ENCODE measurements at regions of chr9 and their contacts with region 1.

Region 1: GRCh38 chr9:78035383-78035993 is 3.9 kb upstream of the GNAQ start:
- DNase-seq: peak in 7 of 9 donors; percentile 53 to 76 (median 72)
- ATAC-seq: peak; percentile 36
- H3K4me3 ChIP-seq: no peak overlapping the region
- H3K4me3 Mint-ChIP-seq: peak overlapping the region in 6 of 10 donors; percentile 3 to 41 (median 24)
- H3K27ac ChIP-seq: no peak overlapping the region
- H3K27ac Mint-ChIP-seq: peak overlapping the region in 7 of 9 donors; percentile 2 to 84 (median 36)
- H3K4me1 ChIP-seq: peaks cover 0 to 20% of the 10 kb centered on the region in 2 donors
- H3K4me1 Mint-ChIP-seq: peaks cover 19 to 35% (median 34%) of the 10 kb centered on the region in 7 donors
- H3K27me3 ChIP-seq: no peaks in the 10 kb centered on the region
- H3K27me3 Mint-ChIP-seq: peaks cover 0 to 4% (median 0%) of the 10 kb centered on the region in 5 donors

Region 2: DNA sequence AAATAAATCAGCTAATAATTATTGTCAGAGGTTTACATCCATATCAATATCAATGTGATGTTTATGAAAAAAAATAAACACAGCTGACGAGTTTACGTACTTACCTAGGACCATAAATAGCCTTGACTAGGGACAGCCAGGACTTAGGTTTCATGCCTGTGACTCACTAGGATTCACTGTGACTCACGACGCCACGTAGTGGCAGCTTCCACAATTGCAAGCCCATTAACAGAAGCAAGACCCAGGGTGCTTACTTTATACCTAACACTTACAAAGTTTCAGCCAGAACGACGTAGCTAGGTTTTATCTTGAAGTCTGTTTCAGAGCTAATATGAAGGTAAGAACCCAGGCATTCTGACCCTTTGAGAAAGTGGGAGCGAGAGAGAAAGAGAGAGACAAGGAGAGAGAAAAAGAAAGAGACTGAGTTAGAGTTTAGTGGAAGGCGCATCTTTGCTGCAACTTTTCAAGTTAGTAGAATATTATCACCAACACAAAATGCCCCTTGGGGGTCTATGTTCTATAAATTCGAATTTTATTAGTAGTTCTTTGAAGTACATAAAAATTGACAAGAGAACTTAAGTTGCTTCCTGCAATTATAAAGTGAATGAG is 578.6 kb before region 1 on chr9:
- CTCF ChIA-PET with region 1: interaction called, 18 read pairs
- POLR2A ChIA-PET with region 1: no interaction called
- intact Hi-C with region 1: loop called (anchors 1 kb)
- DNase-seq: peak; percentile 43 to 77 (median 68)
- ATAC-seq: peak; percentile 83
- H3K4me3 ChIP-seq: no peak overlapping the region
- H3K4me3 Mint-ChIP-seq: no peak overlapping the region
- H3K27ac ChIP-seq: no peak overlapping the region
- H3K27ac Mint-ChIP-seq: no peak overlapping the region
- H3K4me1 ChIP-seq: no peaks in the 10 kb centered on the region
- H3K4me1 Mint-ChIP-seq: peaks cover 9 to 30% (median 24%) of the 10 kb centered on the region in 7 donors
- H3K27me3 ChIP-seq: no peaks in the 10 kb centered on the region
- H3K27me3 Mint-ChIP-seq: no peaks in the 10 kb centered on the region

Region 3: GRCh38 chr9:77827104-77827784 is 208.2 kb before region 1 on chr9:
- CTCF ChIA-PET with region 1: no interaction called
- POLR2A ChIA-PET with region 1: no interaction called
- intact Hi-C with region 1: loop called in 1 of 2 experiments (anchors 5 kb)
- DNase-seq: peak in 2 of 9 donors; percentile 5 to 13
- ATAC-seq: peak; percentile 51
- H3K4me3 ChIP-seq: no peak overlapping the region
- H3K4me3 Mint-ChIP-seq: peak overlapping the region in 9 of 10 donors; percentile 10 to 71 (median 47)
- H3K27ac ChIP-seq: no peak overlapping the region
- H3K27ac Mint-ChIP-seq: peak overlapping the region in 5 of 9 donors; percentile 8 to 67 (median 60)
- H3K4me1 ChIP-seq: peaks cover 0 to 8% of the 10 kb centered on the region in 2 donors
- H3K4me1 Mint-ChIP-seq: peaks cover 23 to 56% (median 43%) of the 10 kb centered on the region in 7 donors
- H3K27me3 ChIP-seq: no peaks in the 10 kb centered on the region
- H3K27me3 Mint-ChIP-seq: no peaks in the 10 kb centered on the region

Region 4: GRCh38 chr9:77977210-77977611 is 58.3 kb before region 1 on chr9:
- CTCF ChIA-PET with region 1: interaction called, 50 read pairs
- POLR2A ChIA-PET with region 1: interaction called, 4 read pairs
- intact Hi-C with region 1: loop called (anchors 1 kb)
- DNase-seq: peak; percentile 12 to 58 (median 47)
- ATAC-seq: peak; percentile 78
- H3K4me3 ChIP-seq: peak overlapping the region; percentile 2
- H3K4me3 Mint-ChIP-seq: peak overlapping the region in 9 of 10 donors; percentile 29 to 77 (median 60)
- H3K27ac ChIP-seq: peak overlapping the region; percentile 20
- H3K27ac Mint-ChIP-seq: peak overlapping the region; percentile 57 to 87 (median 78)
- H3K4me1 ChIP-seq: peaks cover 23 to 45% of the 10 kb centered on the region in 2 donors
- H3K4me1 Mint-ChIP-seq: peaks cover 41 to 76% (median 62%) of the 10 kb centered on the region in 7 donors
- H3K27me3 ChIP-seq: no peaks in the 10 kb centered on the region
- H3K27me3 Mint-ChIP-seq: no peaks in the 10 kb centered on the region

Region 5: DNA sequence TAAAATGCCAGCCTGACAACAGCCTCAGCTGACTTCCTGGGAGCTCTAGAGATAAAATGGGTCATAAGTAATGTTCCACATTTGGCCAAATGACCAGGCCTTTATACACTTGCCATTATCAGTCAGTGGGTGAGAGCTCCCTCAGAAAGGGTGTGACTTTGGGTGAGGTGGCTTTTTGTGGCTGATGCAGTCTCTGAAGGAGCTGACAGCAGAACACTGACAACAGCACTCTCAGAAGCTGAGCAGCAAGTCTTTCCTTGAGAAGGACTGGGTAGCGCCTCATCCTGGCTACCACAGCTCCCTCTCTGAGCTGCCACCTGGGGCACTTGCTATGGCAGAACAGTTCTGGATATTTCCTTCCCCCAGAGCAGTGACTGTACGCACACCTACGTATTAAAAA is 18.1 kb after region 1 on chr9:
- CTCF ChIA-PET with region 1: interaction called, 20 read pairs
- POLR2A ChIA-PET with region 1: interaction called, 3 read pairs
- intact Hi-C with region 1: no loop called
- DNase-seq: no peak
- ATAC-seq: peak; percentile 31
- H3K4me3 ChIP-seq: no peak overlapping the region
- H3K4me3 Mint-ChIP-seq: peak overlapping the region in 7 of 10 donors; percentile 19 to 69 (median 47)
- H3K27ac ChIP-seq: no peak overlapping the region
- H3K27ac Mint-ChIP-seq: peak overlapping the region in 2 of 9 donors; percentile 7 to 48
- H3K4me1 ChIP-seq: peaks cover 14 to 16% of the 10 kb centered on the region in 2 donors
- H3K4me1 Mint-ChIP-seq: peaks cover 15 to 41% (median 25%) of the 10 kb centered on the region in 7 donors
- H3K27me3 ChIP-seq: no peaks in the 10 kb centered on the region
- H3K27me3 Mint-ChIP-seq: peaks cover 0 to 42% (median 0%) of the 10 kb centered on the region in 5 donors

Region 6: DNA sequence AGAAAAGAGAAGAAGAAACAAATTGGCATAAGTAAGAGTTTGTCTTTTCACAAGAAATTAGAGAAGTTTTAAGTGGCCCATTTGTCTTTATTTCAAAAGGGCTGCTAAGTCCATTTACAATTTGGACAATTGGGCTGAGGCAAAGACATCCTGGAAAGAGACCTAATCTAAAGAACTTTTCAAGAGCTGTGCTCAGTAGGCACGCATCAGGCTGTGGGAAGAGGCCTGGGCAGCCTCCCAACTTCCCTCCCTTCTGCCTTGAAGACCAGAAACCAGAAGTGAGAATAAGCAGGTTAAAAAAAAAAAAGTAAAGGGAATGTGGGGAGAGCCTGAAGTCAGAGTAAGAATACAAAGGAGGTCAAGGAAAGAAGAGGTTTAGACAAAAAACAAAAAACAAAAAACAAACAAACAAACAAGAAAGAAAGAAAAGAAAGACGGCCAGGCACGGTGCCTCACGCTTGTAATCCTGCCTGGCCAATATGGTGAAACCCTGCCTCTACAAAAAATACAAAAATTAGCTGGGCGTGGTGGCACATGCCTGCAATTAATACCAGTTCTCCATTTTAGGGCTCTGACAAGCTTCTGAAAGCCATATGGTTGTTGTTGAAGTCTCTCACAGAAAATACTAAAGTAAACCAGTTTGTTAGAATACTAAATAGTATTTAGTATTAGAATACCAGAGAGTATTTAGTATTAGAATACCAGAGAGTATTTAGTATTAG is 152.4 kb after region 1 on chr9:
- CTCF ChIA-PET with region 1: no interaction called
- POLR2A ChIA-PET with region 1: no interaction called
- intact Hi-C with region 1: no loop called
- DNase-seq: no peak
- ATAC-seq: no peak
- H3K4me3 ChIP-seq: no peak overlapping the region
- H3K4me3 Mint-ChIP-seq: no peak overlapping the region
- H3K27ac ChIP-seq: no peak overlapping the region
- H3K27ac Mint-ChIP-seq: peak overlapping the region in 2 of 9 donors; percentile 9 to 71
- H3K4me1 ChIP-seq: no peaks in the 10 kb centered on the region
- H3K4me1 Mint-ChIP-seq: peaks cover 0 to 7% (median 0%) of the 10 kb centered on the region in 7 donors
- H3K27me3 ChIP-seq: no peaks in the 10 kb centered on the region
- H3K27me3 Mint-ChIP-seq: peaks cover 0 to 28% (median 0%) of the 10 kb centered on the region in 5 donors

Region 7: DNA sequence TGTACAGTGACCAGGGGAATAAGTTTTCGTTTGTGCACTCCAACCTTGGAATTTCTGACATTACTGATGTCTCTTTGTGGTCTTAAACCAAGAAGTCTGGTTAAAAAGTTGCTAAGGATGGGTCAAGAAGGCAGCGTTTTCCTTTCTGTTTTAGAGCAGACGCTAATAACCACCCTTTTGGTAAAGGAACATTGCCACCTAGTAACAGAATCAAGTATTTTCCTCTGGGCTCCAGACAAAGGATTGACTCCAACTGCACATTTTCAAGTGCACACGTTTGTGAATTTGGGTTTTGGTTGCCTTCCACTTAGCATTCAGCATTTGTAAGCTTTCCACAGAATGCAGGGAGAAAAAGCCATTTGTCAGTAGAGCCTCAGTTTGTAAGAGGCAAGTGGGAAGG is 178.2 kb after region 1 on chr9:
- CTCF ChIA-PET with region 1: interaction called, 20 read pairs
- POLR2A ChIA-PET with region 1: interaction called, 3 read pairs
- intact Hi-C with region 1: loop called (anchors 1 to 5 kb)
- DNase-seq: peak in 6 of 9 donors; percentile 12 to 54 (median 40)
- ATAC-seq: peak; percentile 65
- H3K4me3 ChIP-seq: no peak overlapping the region
- H3K4me3 Mint-ChIP-seq: peak overlapping the region in 3 of 10 donors; percentile 16 to 61 (median 46)
- H3K27ac ChIP-seq: no peak overlapping the region
- H3K27ac Mint-ChIP-seq: peak overlapping the region in 4 of 9 donors; percentile 30 to 89 (median 74)
- H3K4me1 ChIP-seq: peaks cover 34 to 38% of the 10 kb centered on the region in 2 donors
- H3K4me1 Mint-ChIP-seq: peaks cover 17 to 51% (median 44%) of the 10 kb centered on the region in 7 donors
- H3K27me3 ChIP-seq: no peaks in the 10 kb centered on the region
- H3K27me3 Mint-ChIP-seq: peaks cover 0 to under 1% (median 0%) of the 10 kb centered on the region in 5 donors

Region 8: GRCh38 chr9:79280691-79281090 is 1245.2 kb after region 1 on chr9:
- CTCF ChIA-PET with region 1: no interaction called
- POLR2A ChIA-PET with region 1: no interaction called
- intact Hi-C with region 1: no loop called
- DNase-seq: no peak
- ATAC-seq: no peak
- H3K4me3 ChIP-seq: no peak overlapping the region
- H3K4me3 Mint-ChIP-seq: no peak overlapping the region
- H3K27ac ChIP-seq: no peak overlapping the region
- H3K27ac Mint-ChIP-seq: no peak overlapping the region
- H3K4me1 ChIP-seq: no peaks in the 10 kb centered on the region
- H3K4me1 Mint-ChIP-seq: no peaks in the 10 kb centered on the region
- H3K27me3 ChIP-seq: no peaks in the 10 kb centered on the region
- H3K27me3 Mint-ChIP-seq: peaks cover 0 to 13% (median 11%) of the 10 kb centered on the region in 5 donors

Region 9: DNA sequence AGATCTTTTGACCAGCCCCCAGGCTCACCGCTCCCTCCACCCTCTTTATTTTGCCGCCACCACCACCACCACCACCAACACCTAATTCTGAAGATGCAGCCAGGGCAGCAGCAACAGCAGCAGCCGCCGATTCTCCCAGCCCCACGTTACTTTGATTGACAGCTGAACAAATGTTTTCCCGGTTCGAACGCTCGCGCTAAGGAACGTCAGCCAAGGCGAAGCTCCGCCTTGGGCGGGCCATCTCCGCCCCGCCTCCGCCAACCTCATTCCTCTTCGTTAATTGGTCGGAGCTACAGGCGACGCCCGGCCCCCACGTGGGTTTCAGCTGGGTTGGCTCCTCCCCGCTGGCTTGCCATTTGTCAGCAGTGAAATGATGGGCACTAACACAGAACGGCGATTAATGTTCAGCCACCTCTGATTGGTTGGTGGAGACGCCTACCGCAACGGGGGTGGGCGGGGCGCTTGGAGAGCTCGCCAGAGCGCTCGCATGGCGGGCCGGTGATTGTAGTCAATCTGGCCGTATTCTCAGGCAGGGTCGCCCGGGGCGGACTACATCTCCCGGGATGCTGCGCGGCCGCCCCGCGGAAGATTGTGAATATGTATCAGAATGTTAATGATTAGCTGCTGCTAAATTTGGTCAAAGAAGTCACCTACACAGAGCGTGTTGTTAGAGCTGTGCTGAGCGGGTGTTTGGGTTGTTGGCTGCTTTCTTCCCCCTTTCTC is 1536.0 kb after region 1 on chr9 and contains the start of gene TLE4:
- CTCF ChIA-PET with region 1: no interaction called
- POLR2A ChIA-PET with region 1: no interaction called
- intact Hi-C with region 1: loop called in 1 of 2 experiments (anchors 5 kb)
- DNase-seq: peak; percentile 96 to 100 (median 100)
- ATAC-seq: peak; percentile 90
- H3K4me3 ChIP-seq: peak within 1 kb of the TSS; percentile 95
- H3K4me3 Mint-ChIP-seq: peak within 1 kb of the TSS in 7 of 10 donors; percentile 59 to 91 (median 78)
- H3K27ac ChIP-seq: peak within 1 kb of the TSS; percentile 87
- H3K27ac Mint-ChIP-seq: peak within 1 kb of the TSS in 4 of 9 donors; percentile 52 to 74 (median 68)
- H3K4me1 ChIP-seq: peaks cover 17 to 19% of the 10 kb centered on the region in 2 donors
- H3K4me1 Mint-ChIP-seq: peaks cover 22 to 40% (median 32%) of the 10 kb centered on the region in 7 donors
- H3K27me3 ChIP-seq: no peaks in the 10 kb centered on the region
- H3K27me3 Mint-ChIP-seq: peaks cover 0 to 34% (median 5%) of the 10 kb centered on the region in 5 donors
- total RNA-seq, gene TLE4: 21.0 to 196 (median 106) TPM